ENCODE measurements at regions of chr1 and their contacts with region 1.

Region 1: GRCh38 chr1:155063550-155064110 is at the start of gene EFNA4:
- DNase-seq: peak; percentile 89
- H3K4me3 Mint-ChIP-seq: peak within 1 kb of the TSS; percentile 80
- H3K27ac Mint-ChIP-seq: peak within 1 kb of the TSS; percentile 31
- H3K4me1 Mint-ChIP-seq: peaks cover 29% of the 10 kb centered on the region
- H3K27me3 Mint-ChIP-seq: no peaks in the 10 kb centered on the region
- total RNA-seq, gene EFNA4: 5.0 to 6.1 TPM

Region 2: DNA sequence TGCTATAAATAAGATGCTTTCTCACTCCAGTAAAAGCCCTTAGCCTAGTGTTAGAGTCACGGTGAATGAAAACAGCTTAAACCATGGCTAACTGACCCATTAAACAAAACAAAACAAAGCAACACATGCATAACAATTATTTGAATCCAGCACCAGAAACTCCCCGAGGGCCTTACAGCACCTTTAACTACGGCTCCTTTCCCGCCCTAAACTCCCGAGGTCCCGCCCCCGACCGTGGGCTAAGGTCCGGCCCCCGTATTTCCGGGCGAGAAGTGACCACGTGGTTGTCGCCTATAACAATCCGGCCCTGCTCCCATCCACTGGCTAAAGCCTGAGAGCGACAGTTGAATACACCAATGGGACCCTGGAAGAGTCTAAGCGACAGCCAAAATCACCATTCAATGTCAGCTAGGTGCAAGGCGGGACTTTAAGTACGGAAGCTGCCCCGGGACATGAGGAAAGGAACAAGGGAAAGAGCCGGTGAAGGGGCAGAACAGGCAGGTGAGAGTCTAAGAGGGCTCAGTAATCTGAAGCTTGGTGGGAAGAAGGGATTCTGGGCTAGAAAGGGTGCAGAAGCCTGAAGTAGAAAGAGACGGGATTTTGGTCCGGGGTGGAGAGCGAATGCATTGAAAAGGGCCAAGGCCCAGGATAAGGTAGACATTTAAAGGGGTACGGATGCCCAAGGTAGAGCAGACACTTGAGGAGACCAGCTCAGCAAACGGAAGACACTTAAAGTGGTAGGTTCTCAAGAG is 80.6 kb before region 1 on chr1 and contains the start of gene FLAD1:
- CTCF ChIA-PET with region 1: interaction called, 8 read pairs
- POLR2A ChIA-PET with region 1: no interaction called
- intact Hi-C with region 1: loop called (anchors 5 kb)
- DNase-seq: peak; percentile 98
- H3K4me3 Mint-ChIP-seq: no peak within 1 kb of the TSS
- H3K27ac Mint-ChIP-seq: no peak within 1 kb of the TSS
- H3K4me1 Mint-ChIP-seq: peaks cover 14% of the 10 kb centered on the region
- H3K27me3 Mint-ChIP-seq: no peaks in the 10 kb centered on the region
- total RNA-seq, gene FLAD1: 45.4 to 49.4 TPM

Region 3: GRCh38 chr1:155044812-155045690 is 18.6 kb before region 1 on chr1:
- CTCF ChIA-PET with region 1: interaction called, 245 read pairs
- POLR2A ChIA-PET with region 1: no interaction called
- intact Hi-C with region 1: loop called (anchors 1 kb)
- DNase-seq: peak; percentile 76
- H3K4me3 Mint-ChIP-seq: no peak overlapping the region
- H3K27ac Mint-ChIP-seq: no peak overlapping the region
- H3K4me1 Mint-ChIP-seq: peaks cover 8% of the 10 kb centered on the region
- H3K27me3 Mint-ChIP-seq: no peaks in the 10 kb centered on the region

Region 4: DNA sequence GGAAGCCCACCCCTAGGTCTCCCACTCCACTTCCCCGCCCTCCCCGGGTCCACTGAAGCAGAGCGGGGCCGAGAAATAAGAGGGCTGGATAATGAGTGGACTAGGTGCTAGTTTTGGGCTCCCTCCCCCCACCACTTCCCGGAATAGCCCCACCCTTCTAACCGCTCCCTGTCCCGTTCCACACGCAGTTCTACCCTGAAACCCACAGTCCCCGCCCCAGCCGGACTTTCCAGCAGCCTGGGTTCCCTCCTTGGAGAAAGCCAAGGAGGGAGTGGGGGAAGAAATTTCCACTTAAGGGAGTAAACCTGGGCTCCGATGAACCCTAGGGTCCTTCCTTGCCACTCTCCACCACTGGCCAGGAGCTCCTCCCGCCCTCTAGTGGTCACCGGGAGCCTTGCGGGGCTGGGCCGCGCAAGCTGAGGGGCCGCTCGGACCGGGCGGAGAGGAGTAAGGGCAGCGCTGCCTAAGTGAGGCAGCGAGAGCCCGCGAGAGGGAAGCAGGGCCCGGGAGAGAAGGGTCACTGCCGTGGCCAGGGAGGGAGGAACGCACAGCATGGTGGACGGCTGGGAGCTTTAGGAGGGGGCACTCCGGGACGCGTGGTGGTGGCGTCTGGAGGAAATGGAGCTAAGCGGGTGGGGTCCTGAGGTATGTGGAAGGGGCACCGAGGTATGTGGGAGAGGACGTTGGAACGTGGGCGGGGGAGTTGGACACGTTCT is 129.8 kb after region 1 on chr1:
- CTCF ChIA-PET with region 1: no interaction called
- POLR2A ChIA-PET with region 1: no interaction called
- intact Hi-C with region 1: no loop called
- DNase-seq: peak; percentile 87
- H3K4me3 Mint-ChIP-seq: peak overlapping the region; percentile 86
- H3K27ac Mint-ChIP-seq: peak overlapping the region; percentile 96
- H3K4me1 Mint-ChIP-seq: peaks cover 25% of the 10 kb centered on the region
- H3K27me3 Mint-ChIP-seq: no peaks in the 10 kb centered on the region